ENCODE measurements at regions of chr17 and their contacts with region 1.

Region 1: GRCh38 chr17:29591737-29592624 is 951 bp upstream of the ANKRD13B start:
- DNase-seq: peak; percentile 85 to 99 (median 94)

Region 2: GRCh38 chr17:29293890-29294579 is 297.9 kb before region 1 on chr17 and contains the start of gene NUFIP2:
- intact Hi-C with region 1: no loop called
- DNase-seq: peak; percentile 99 to 100 (median 100)

Region 3: DNA sequence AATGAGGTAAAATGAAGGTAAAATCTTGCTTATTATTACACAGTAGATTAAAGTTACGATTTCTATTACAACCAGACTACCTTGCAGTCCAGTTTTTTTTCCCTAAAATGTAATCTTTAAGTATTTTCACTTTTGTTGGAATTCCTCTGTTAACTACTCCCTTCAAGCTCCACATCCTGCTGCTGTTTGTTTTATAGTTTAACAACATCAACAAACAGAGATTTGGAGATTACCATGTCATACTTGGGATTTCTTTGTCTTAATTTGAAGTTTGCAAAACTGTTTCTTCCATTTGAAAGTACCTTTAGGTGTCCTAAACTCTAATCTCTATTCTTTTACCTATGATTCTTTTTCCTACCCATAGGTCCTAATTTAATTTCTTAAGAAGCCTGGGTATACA is 108.5 kb before region 1 on chr17:
- intact Hi-C with region 1: no loop called
- DNase-seq: no peak

Region 4: DNA sequence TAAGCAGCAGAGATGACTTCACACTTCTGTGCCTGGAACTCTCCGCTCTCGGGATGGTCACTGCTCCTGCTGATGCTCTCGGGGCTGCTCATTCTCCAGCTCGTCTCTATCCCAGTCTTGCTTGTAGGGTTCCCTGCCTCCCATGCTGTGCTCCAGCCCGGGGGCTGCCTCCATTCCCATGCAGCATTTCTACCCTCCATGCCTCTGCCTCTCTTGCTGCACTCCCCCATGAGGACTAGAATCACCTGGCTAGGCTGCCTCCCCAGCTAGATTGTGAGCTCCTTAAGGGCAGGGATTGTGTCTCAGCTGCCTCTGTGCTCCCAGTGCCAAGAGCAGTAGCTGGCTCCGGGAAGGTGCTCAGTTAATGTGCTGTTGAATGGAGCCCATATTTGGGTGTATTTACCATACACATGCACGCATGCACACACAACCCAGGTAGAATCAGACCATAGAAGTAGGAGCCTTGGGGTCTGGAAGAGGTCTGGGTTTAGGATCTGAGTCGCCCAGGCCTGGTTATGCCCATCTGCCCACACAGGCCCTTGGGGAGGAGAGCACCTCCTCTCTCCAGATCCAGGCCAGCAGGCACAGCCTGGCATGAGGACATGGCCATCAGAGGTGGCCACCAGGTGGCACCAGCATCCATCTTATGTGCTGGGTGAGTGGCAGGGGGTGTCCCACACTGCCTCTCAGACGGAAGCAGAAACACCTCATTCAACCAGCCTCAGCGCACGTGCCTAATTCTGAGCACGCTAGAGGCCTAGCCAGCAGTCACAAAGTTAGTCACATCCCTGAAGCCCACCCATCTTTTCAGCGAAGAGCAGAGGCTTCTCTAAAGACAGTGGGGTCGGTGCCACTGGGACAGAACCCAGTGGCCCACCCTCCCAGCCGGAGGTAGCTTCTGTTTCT is 11.9 kb before region 1 on chr17:
- intact Hi-C with region 1: loop called (anchors 1 kb)
- DNase-seq: peak; percentile 83 to 98 (median 93)

Measured in posterior cingulate gyrus (tissue), 11 donors.